AG04449 (cell line): ENCODE measurements at regions of chr3 and their contacts with region 1.

Region 1: GRCh38 chr3:19866751-19867347 is 67.2 kb downstream of the EFHB start:
- DNase-seq: peak; percentile 17
- H3K4me3 ChIP-seq: no peak overlapping the region
- CTCF ChIP-seq: peak; percentile 63

Region 2: GRCh38 chr3:18559331-18559842 is 1307.5 kb before region 1 on chr3:
- CTCF ChIA-PET with region 1: interaction called, 10 read pairs
- POLR2A ChIA-PET with region 1: no interaction called
- DNase-seq: no peak
- H3K4me3 ChIP-seq: no peak overlapping the region
- CTCF ChIP-seq: peak; percentile 32

Region 3: GRCh38 chr3:19348929-19349564 is 517.8 kb before region 1 on chr3:
- CTCF ChIA-PET with region 1: interaction called, 17 read pairs
- POLR2A ChIA-PET with region 1: no interaction called
- DNase-seq: no peak
- H3K4me3 ChIP-seq: no peak overlapping the region
- CTCF ChIP-seq: no peak

Region 4: DNA sequence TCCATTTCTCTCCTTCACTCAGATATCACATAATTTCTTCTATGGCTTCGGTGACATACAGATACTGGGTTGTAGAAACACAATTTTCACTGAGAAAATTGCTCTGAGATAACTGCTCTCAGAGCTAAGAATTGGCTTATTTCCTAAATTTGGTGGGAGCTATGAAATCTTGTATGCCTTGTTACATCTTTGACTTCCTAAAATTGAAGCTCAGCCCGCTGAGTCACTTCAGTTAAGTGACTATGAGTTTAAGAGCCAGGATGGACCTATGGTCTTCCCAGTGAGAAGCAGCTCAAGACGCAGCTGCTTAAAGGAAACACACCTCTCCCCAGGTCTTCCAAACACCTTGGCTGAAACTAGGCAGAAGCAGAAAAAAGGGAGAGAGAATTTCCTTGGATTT is 10.8 kb after region 1 on chr3:
- CTCF ChIA-PET with region 1: interaction called, 19 read pairs
- POLR2A ChIA-PET with region 1: no interaction called
- DNase-seq: no peak
- H3K4me3 ChIP-seq: no peak overlapping the region
- CTCF ChIP-seq: no peak

Region 5: DNA sequence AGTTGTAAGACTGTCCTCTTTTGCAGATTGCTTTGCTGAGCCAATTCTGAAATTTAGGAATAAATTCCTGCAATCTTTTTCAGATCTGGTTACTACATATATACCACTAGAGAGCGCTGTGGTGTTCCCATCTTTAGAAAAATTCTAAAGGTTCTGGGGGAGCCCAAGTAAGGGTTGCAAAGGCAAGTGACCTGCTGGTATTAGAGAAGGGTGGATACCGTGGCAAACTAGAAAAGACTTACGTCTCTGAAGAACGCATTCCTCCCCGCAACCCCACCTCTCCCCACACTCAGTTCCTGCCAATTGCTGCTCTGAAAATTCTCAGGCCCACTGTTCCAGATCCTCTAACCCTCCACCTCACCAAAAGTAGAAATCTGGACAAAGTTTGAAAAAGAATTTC is 18.6 kb after region 1 on chr3:
- CTCF ChIA-PET with region 1: interaction called, 37 read pairs
- POLR2A ChIA-PET with region 1: no interaction called
- DNase-seq: no peak
- H3K4me3 ChIP-seq: no peak overlapping the region
- CTCF ChIP-seq: peak; percentile 34